Breast epithelium (tissue), 4 donors: ENCODE measurements at regions of chrX and their contacts with region 1.

Region 1: DNA sequence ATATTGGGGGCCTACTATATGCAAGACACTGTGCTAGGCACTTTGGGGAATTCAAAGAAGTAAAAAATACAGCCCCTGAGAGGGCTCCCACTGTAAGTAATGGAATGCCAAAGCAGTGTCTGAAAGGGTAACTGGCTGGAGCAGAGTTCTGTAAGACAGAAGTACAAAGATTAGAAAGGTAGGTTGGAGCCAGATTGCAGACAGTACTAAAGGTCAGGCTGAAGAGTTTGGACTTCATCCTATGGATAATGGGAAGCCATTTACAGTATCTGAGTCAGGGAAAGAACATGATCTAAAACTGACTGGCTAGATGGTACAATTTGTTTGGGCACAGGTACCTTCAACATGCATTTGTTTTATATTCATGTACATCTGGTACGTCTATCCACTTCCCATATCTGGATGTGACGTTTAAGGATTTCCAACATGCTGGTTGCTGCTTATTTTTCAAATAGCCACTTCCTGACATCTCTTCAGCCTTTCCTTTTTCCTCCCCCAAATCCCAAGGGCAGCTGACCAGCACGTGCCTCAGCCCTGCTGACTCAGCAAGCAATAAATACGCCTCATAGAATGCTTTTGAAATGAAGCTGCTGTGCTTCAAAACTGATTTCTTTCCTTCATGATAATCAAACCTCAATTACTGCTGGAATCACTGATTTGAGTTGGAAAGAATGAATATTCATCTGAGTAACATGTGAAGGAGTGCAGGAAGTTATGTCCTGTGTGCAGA is 9.5 kb downstream of the ENOX2 start:
- DNase-seq: no peak
- H3K4me3 ChIP-seq: no peak overlapping the region
- H3K27ac ChIP-seq: no peak overlapping the region
- H3K4me1 ChIP-seq: no peaks in the 10 kb centered on the region
- H3K27me3 ChIP-seq: peaks cover 0 to 23% of the 10 kb centered on the region in 2 donors
- CTCF ChIP-seq: no peak
- POLR2A ChIP-seq: no peak

Region 2: GRCh38 chrX:130916636-130917422 is 23.3 kb after region 1 on chrX:
- intact Hi-C with region 1: loop called (anchors 1 kb)
- DNase-seq: no peak
- H3K4me3 ChIP-seq: no peak overlapping the region
- H3K27ac ChIP-seq: no peak overlapping the region
- H3K4me1 ChIP-seq: no peaks in the 10 kb centered on the region
- H3K27me3 ChIP-seq: peaks cover 0 to 48% of the 10 kb centered on the region in 2 donors
- CTCF ChIP-seq: peak; percentile 12 to 71 (median 59)
- POLR2A ChIP-seq: no peak